ENCODE measurements at regions of chr2 and their contacts with region 1.

Region 1: GRCh38 chr2:42047488-42048298 is at the start of gene PKDCC:
- DNase-seq: peak; percentile 85
- H3K4me3 ChIP-seq: peak within 1 kb of the TSS; percentile 53 to 82 (median 66)
- H3K27ac ChIP-seq: peak within 1 kb of the TSS; percentile 86 to 96 (median 92)
- H3K4me1 ChIP-seq: peaks cover 14 to 48% (median 33%) of the 10 kb centered on the region in 4 donors
- H3K27me3 ChIP-seq: peaks cover 17% of the 10 kb centered on the region
- CTCF ChIP-seq: no peak
- EP300 ChIP-seq: no peak
- POLR2A ChIP-seq: peak; percentile 12
- total RNA-seq, gene PKDCC: 60.6 to 108 (median 74.6) TPM

Region 2: DNA sequence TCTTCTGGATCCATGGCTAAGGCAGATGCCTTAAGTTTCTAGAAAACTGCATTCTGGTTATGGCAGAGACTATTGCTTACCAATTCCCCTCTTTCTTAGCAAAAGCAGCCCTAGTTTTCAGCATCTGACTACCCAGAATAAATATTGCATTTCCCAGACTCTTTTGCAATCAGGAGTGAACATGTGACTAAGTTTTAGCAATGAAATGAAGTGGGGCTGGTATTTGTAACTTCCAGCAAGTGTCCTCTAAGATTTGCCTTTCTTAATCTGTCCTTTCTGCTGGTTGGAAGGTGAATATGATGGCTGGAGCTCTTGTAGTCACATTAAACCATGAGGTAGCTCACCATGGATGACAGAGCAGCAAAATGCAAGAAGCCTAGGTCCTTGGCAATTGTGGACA is 132.8 kb before region 1 on chr2:
- in situ Hi-C with region 1: no loop called
- intact Hi-C with region 1: loop called (anchors 5 kb)
- DNase-seq: no peak
- H3K4me3 ChIP-seq: no peak overlapping the region
- H3K27ac ChIP-seq: peak overlapping the region in 3 of 4 donors; percentile 7 to 16 (median 8)
- H3K4me1 ChIP-seq: peaks cover 0 to 7% (median 0%) of the 10 kb centered on the region in 4 donors
- H3K27me3 ChIP-seq: no peaks in the 10 kb centered on the region
- CTCF ChIP-seq: no peak
- EP300 ChIP-seq: no peak
- POLR2A ChIP-seq: no peak

Region 3: GRCh38 chr2:41966431-41966893 is 81.2 kb before region 1 on chr2:
- in situ Hi-C with region 1: no loop called
- intact Hi-C with region 1: loop called (anchors 5 kb)
- DNase-seq: peak; percentile 73
- H3K4me3 ChIP-seq: no peak overlapping the region
- H3K27ac ChIP-seq: peak overlapping the region; percentile 67 to 82 (median 75)
- H3K4me1 ChIP-seq: peaks cover 43 to 56% (median 52%) of the 10 kb centered on the region in 4 donors
- H3K27me3 ChIP-seq: no peaks in the 10 kb centered on the region
- CTCF ChIP-seq: no peak
- EP300 ChIP-seq: peak; percentile 18
- POLR2A ChIP-seq: no peak

Region 4: GRCh38 chr2:43032213-43033015 is 984.7 kb after region 1 on chr2:
- in situ Hi-C with region 1: no loop called
- intact Hi-C with region 1: no loop called
- DNase-seq: peak; percentile 87
- H3K4me3 ChIP-seq: no peak overlapping the region
- H3K27ac ChIP-seq: peak overlapping the region; percentile 81 to 89 (median 85)
- H3K4me1 ChIP-seq: peaks cover 7 to 31% (median 25%) of the 10 kb centered on the region in 4 donors
- H3K27me3 ChIP-seq: no peaks in the 10 kb centered on the region
- CTCF ChIP-seq: peak in 1 of 5 experiments; percentile 17
- EP300 ChIP-seq: no peak
- POLR2A ChIP-seq: peak; percentile 59